ENCODE measurements at regions of chr15 and their contacts with region 1.

Region 1: DNA sequence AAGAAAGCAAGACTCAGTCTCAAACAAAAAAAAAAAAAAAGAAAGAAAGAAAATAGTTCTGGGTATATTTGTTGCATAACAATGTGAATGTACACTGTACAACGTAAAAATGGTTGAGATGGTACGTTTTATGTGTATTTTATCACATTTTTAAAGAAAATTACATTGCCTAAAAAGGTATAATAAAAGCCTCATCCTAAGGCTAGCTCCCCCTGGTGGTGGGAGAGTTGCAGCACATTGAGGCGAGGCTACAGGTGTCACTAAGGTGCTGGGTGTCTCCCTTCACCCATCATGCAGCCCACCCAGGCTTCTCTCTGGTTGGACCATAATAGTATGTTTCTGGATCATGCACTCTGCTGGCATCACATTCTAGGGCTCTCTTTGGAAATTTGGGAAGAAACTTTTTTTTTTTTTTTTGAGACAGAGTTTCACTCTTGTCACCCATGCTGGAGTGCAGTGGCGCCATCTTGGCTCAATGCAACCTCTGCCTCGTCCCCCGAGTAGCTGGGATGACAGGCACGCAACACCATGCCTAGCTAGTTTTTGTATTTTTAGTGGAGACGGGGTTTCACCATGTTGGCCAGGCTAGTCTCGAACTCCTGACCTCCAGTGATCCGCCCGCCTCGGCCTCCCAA is 12.4 kb upstream of the RAB11A start:
- DNase-seq: peak; percentile 83
- ATAC-seq: peak; percentile 76
- H3K4me3 Mint-ChIP-seq: no peak overlapping the region
- H3K27ac Mint-ChIP-seq: no peak overlapping the region
- H3K4me1 Mint-ChIP-seq: peaks cover 16% of the 10 kb centered on the region
- H3K27me3 Mint-ChIP-seq: no peaks in the 10 kb centered on the region; the same call in 1 of the 2 replicates
- CTCF ChIP-seq: peak; percentile 78

Region 2: GRCh38 chr15:65841121-65841925 is 15.6 kb before region 1 on chr15:
- CTCF ChIA-PET with region 1: interaction called, 21 read pairs
- POLR2A ChIA-PET with region 1: no interaction called
- DNase-seq: no peak
- ATAC-seq: no peak
- H3K4me3 Mint-ChIP-seq: no peak overlapping the region
- H3K27ac Mint-ChIP-seq: no peak overlapping the region
- H3K4me1 Mint-ChIP-seq: peaks cover 15% of the 10 kb centered on the region
- H3K27me3 Mint-ChIP-seq: no peaks in the 10 kb centered on the region
- CTCF ChIP-seq: no peak

Region 3: GRCh38 chr15:65869127-65869953 is 12.4 kb after region 1 on chr15 and contains the start of gene RAB11A:
- CTCF ChIA-PET with region 1: interaction called, 33 read pairs
- POLR2A ChIA-PET with region 1: interaction called, 4 read pairs
- DNase-seq: peak; percentile 95
- ATAC-seq: peak; percentile 91
- H3K4me3 Mint-ChIP-seq: peak within 1 kb of the TSS; percentile 99
- H3K27ac Mint-ChIP-seq: peak within 1 kb of the TSS; percentile 99
- H3K4me1 Mint-ChIP-seq: peaks cover 16% of the 10 kb centered on the region
- H3K27me3 Mint-ChIP-seq: peaks cover 3% of the 10 kb centered on the region; the same call in 1 of the 2 replicates
- CTCF ChIP-seq: no peak
- total RNA-seq, gene RAB11A: 223 to 245 TPM (median 224 TPM) in 3 replicates